GM12878 (cell line): ENCODE measurements at regions of chr6 and their contacts with region 1.

Region 1: DNA sequence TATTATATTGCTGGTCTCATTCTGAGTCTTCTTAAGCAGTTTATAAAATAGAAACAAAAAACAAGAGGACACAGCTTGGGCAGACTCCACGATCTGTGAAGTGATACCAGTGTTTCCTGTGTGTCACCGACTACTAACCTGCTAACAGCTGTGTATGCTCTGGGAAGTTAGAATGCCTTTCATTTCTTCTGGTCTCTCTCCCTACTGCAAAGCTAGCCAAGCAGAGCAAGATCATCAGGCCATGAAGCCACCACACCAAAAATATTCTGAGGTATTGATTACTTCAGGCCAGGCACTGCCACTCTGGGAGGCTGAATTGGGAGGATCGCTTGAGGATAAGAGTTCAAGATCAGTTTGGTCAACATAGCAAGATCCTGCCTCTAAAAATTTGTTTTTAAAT is 46.9 kb upstream of the SMIM29 start:
- DNase-seq: peak; percentile 95
- ATAC-seq: peak; percentile 95
- H3K4me3 ChIP-seq: 0 out of 2 replicates have a peak overlapping the region, but pooled peaks have one; percentile 4
- H3K27ac ChIP-seq: peak overlapping the region; percentile 76
- H3K4me1 ChIP-seq: peaks cover 40% of the 10 kb centered on the region
- H3K27me3 ChIP-seq: no peaks in the 10 kb centered on the region
- CTCF ChIP-seq: no peak
- EP300 ChIP-seq: no peak
- POLR2A ChIP-seq: no peak
- RAD21 ChIP-seq: no peak

Region 2: DNA sequence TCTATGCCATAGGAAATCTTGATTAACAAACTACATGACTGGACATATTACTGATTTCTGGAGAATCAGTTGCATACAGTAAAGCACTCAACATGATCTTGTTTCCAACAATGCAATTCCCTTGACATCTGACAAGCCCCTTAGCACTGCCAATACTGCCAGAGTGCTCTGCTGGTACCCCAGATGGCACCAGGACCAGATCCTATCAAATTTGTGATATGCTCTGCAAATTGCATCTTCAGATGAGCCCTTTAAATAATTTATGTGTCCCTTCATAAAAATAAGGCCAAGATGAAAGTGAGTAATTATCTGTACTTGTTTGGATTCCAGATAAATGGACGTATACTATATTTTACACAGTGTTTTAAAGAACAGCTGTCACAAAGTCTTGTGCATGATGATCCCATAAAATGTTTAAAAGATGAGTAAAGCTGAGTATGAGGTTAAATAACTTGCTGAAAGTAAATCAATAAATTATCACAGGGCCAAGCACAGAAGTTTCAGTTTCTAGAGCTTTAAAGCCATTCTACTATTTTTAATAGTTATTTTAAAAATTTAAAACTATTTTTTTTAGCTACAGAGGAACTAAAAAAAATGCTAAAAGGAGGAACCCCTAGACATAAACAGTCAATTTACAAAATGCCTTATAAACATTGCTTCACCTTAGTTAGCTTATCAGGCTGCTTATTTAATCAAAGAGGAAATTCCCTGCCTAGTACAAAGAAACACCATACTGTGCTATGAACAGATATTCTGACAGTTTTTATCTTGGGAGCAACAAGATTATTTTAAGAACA is 54.6 kb after region 1 on chr6:
- CTCF ChIA-PET with region 1: interaction called, 4 read pairs
- POLR2A ChIA-PET with region 1: no interaction called
- RAD21 ChIA-PET with region 1: interaction called, 10 read pairs
- SMC1A ChIA-PET with region 1: interaction called, 6 read pairs
- in situ Hi-C with region 1: no loop called
- intact Hi-C with region 1: no loop called
- DNase-seq: no peak
- ATAC-seq: no peak
- H3K4me3 ChIP-seq: no peak overlapping the region
- H3K27ac ChIP-seq: no peak overlapping the region
- H3K4me1 ChIP-seq: peaks cover 15% of the 10 kb centered on the region
- H3K27me3 ChIP-seq: no peaks in the 10 kb centered on the region
- CTCF ChIP-seq: no peak
- EP300 ChIP-seq: no peak
- POLR2A ChIP-seq: no peak
- RAD21 ChIP-seq: no peak

Region 3: GRCh38 chr6:34392497-34393190 is 96.9 kb after region 1 on chr6 and contains the start of gene NUDT3:
- CTCF ChIA-PET with region 1: interaction called, 13 read pairs
- POLR2A ChIA-PET with region 1: interaction called, 4 read pairs
- RAD21 ChIA-PET with region 1: interaction called, 6 read pairs
- SMC1A ChIA-PET with region 1: interaction called, 15 read pairs
- in situ Hi-C with region 1: no loop called
- intact Hi-C with region 1: loop called (anchors 5 kb)
- DNase-seq: peak; percentile 83
- ATAC-seq: peak; percentile 90
- H3K4me3 ChIP-seq: peak within 1 kb of the TSS; percentile 99
- H3K27ac ChIP-seq: peak within 1 kb of the TSS; percentile 75
- H3K4me1 ChIP-seq: peaks cover 3% of the 10 kb centered on the region
- H3K27me3 ChIP-seq: no peaks in the 10 kb centered on the region
- CTCF ChIP-seq: peak; percentile 90 to 93 (median 90)
- EP300 ChIP-seq: no peak
- POLR2A ChIP-seq: peak; percentile 95
- RAD21 ChIP-seq: peak; percentile 64
- polyA plus RNA-seq, gene NUDT3: 2.4 to 23.6 TPM

Region 4: DNA sequence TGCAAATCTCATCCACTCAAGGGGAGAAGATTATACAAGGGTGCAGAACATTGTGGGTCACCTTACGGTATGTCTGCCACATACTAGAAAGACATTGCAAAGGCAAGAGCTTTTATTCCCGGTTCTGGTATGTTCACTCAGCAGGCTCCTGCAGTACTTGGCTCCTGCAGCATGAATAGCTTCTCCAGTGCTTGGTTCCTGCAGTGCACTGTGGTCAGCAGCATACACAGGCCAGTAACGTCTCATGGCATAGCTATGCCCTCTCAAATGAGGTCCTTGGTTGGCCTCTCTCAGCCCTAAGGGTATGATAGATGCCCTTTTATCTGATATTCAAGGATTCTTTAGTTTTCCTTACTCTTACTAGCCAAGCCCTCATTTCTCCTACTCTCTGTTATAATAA is 832.8 kb after region 1 on chr6:
- CTCF ChIA-PET with region 1: no interaction called
- POLR2A ChIA-PET with region 1: no interaction called
- RAD21 ChIA-PET with region 1: no interaction called
- SMC1A ChIA-PET with region 1: no interaction called
- in situ Hi-C with region 1: no loop called
- intact Hi-C with region 1: no loop called
- DNase-seq: no peak
- ATAC-seq: no peak
- H3K4me3 ChIP-seq: no peak overlapping the region
- H3K27ac ChIP-seq: no peak overlapping the region
- H3K4me1 ChIP-seq: no peaks in the 10 kb centered on the region
- H3K27me3 ChIP-seq: no peaks in the 10 kb centered on the region
- CTCF ChIP-seq: no peak
- EP300 ChIP-seq: no peak
- POLR2A ChIP-seq: no peak
- RAD21 ChIP-seq: no peak